ENCODE measurements at regions of chr4 and their contacts with region 1.

Region 1: GRCh38 chr4:121272526-121272925 is 108.3 kb downstream of the QRFPR start:
- DNase-seq: no peak
- H3K4me3 Mint-ChIP-seq: no peak overlapping the region
- H3K27ac Mint-ChIP-seq: peak overlapping the region; percentile 56
- H3K4me1 Mint-ChIP-seq: peaks cover 16% of the 10 kb centered on the region
- H3K27me3 Mint-ChIP-seq: peaks cover 7% of the 10 kb centered on the region

Region 2: DNA sequence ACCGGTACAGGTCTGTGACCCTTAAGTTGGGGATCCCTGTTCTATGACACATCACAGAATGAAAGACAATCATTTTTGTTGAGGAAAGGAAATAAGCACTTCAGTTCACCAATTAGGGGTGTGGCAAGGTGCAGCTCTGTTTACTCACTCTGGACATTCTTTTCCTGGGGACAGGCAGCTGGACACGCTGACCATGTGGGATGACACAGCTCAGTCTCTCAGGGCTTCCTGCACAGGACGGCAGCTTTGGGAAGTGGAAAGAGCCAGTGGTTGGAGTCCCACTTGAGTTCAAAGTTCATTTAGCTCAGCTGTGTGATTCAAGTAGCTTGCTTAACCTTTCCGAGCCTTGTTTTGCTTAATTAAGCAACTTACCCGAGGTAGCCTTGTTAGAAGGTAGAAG is 255.9 kb before region 1 on chr4:
- CTCF ChIA-PET with region 1: no interaction called
- POLR2A ChIA-PET with region 1: no interaction called
- intact Hi-C with region 1: no loop called
- DNase-seq: no peak
- H3K4me3 Mint-ChIP-seq: no peak overlapping the region
- H3K27ac Mint-ChIP-seq: no peak overlapping the region
- H3K4me1 Mint-ChIP-seq: no peaks in the 10 kb centered on the region
- H3K27me3 Mint-ChIP-seq: no peaks in the 10 kb centered on the region

Region 3: GRCh38 chr4:121243485-121243884 is 29.0 kb before region 1 on chr4:
- CTCF ChIA-PET with region 1: interaction called, 4 read pairs
- POLR2A ChIA-PET with region 1: interaction called, 11 read pairs
- intact Hi-C with region 1: no loop called
- DNase-seq: peak; percentile 49
- H3K4me3 Mint-ChIP-seq: peak overlapping the region; percentile 46
- H3K27ac Mint-ChIP-seq: peak overlapping the region; percentile 76
- H3K4me1 Mint-ChIP-seq: peaks cover 40% of the 10 kb centered on the region
- H3K27me3 Mint-ChIP-seq: peaks cover 3% of the 10 kb centered on the region